MCF 10A (cell line): ENCODE measurements at regions of chr1 and their contacts with region 1.

Region 1: GRCh38 chr1:157156058-157156541 is 17.9 kb upstream of the ETV3 start:
- DNase-seq: peak; percentile 78
- H3K4me3 Mint-ChIP-seq: peak overlapping the region; percentile 63
- H3K27ac Mint-ChIP-seq: peak overlapping the region; percentile 33
- H3K4me1 Mint-ChIP-seq: peaks cover 40% of the 10 kb centered on the region
- H3K27me3 Mint-ChIP-seq: no peaks in the 10 kb centered on the region
- CTCF ChIP-seq: peak; percentile 99

Region 2: GRCh38 chr1:157073944-157074767 is 81.9 kb before region 1 on chr1:
- CTCF ChIA-PET with region 1: interaction called, 34 read pairs
- POLR2A ChIA-PET with region 1: no interaction called
- intact Hi-C with region 1: no loop called
- DNase-seq: peak; percentile 81
- H3K4me3 Mint-ChIP-seq: no peak overlapping the region
- H3K27ac Mint-ChIP-seq: no peak overlapping the region
- H3K4me1 Mint-ChIP-seq: no peaks in the 10 kb centered on the region
- H3K27me3 Mint-ChIP-seq: no peaks in the 10 kb centered on the region
- CTCF ChIP-seq: peak; percentile 60

Region 3: DNA sequence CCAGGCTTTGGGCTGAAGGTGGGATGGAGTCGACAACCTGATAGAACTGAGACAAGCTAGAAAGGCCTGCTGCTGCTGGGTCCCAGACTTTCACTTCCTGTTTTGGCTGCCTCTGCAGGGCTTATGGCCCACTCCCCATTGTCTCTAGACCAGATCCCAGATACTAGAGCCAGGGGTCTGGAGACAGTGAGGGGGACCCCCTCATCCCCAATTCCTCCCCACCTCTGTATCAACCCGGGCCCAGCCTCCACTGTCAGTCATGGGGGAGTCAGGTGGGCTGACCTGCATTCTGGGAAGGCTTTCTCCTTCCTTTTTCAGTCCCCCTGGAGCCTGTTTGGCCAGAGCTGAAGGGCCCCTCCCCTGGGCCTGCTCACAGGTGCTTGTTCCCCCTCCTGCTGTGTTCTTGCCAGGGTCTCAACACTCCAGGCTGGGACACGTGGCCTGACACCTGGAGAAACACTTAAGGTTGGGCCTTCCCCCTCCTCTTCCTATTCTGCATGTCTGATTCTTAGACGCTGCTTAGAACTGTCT is 38.5 kb before region 1 on chr1:
- CTCF ChIA-PET with region 1: interaction called, 53 read pairs
- POLR2A ChIA-PET with region 1: no interaction called
- intact Hi-C with region 1: no loop called
- DNase-seq: no peak
- H3K4me3 Mint-ChIP-seq: no peak overlapping the region
- H3K27ac Mint-ChIP-seq: no peak overlapping the region
- H3K4me1 Mint-ChIP-seq: no peaks in the 10 kb centered on the region
- H3K27me3 Mint-ChIP-seq: peaks cover 13% of the 10 kb centered on the region
- CTCF ChIP-seq: no peak

Region 4: DNA sequence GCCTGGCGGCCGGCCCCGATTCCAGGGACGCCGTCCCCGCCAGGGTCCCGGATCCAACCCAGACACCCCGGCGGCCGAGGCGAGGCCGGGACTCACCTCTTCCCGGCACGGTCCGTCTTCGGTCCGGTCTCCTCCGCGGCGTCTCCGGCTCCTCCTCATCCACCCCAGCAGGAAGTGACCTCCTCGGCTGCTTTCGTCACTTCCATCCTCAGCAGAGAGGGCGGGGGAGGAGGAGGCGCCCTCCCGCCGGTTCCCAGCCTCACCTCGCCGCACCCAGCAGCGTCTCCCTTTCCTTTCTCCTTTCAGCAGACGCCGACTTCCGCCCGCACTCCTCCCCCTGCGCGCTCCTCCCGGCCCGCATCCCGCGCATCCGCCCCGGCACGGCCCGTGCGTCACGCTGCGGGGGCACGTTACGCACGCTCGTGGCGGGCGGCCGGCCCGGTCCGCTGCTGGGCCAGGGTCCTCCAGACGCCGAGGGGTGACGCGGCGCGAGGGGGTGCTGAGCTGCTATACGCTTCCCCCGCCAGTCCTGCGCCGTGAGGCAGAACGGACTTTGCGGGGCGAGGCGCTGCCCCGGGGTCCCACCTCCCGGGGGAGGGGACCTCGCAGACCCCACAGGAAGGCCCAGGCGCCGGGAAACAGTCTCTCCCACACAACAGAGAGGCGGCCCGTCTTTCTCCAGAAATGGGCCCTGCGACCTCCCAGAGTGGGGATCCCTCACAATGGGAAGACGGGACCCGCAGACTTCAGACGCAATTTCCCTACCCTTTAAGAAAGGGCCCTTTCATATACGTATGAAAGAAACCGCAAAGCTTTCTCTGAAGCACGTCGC is 17.7 kb before region 1 on chr1 and contains the start of gene ETV3:
- CTCF ChIA-PET with region 1: interaction called, 419 read pairs
- POLR2A ChIA-PET with region 1: interaction called, 64 read pairs
- intact Hi-C with region 1: loop called (anchors 1 kb)
- DNase-seq: peak; percentile 97
- H3K4me3 Mint-ChIP-seq: peak within 1 kb of the TSS; percentile 79
- H3K27ac Mint-ChIP-seq: peak within 1 kb of the TSS; percentile 76
- H3K4me1 Mint-ChIP-seq: peaks cover 29% of the 10 kb centered on the region
- H3K27me3 Mint-ChIP-seq: no peaks in the 10 kb centered on the region
- CTCF ChIP-seq: no peak
- total RNA-seq, gene ETV3: 28.6 and 35.0 TPM in 2 replicates

Region 5: DNA sequence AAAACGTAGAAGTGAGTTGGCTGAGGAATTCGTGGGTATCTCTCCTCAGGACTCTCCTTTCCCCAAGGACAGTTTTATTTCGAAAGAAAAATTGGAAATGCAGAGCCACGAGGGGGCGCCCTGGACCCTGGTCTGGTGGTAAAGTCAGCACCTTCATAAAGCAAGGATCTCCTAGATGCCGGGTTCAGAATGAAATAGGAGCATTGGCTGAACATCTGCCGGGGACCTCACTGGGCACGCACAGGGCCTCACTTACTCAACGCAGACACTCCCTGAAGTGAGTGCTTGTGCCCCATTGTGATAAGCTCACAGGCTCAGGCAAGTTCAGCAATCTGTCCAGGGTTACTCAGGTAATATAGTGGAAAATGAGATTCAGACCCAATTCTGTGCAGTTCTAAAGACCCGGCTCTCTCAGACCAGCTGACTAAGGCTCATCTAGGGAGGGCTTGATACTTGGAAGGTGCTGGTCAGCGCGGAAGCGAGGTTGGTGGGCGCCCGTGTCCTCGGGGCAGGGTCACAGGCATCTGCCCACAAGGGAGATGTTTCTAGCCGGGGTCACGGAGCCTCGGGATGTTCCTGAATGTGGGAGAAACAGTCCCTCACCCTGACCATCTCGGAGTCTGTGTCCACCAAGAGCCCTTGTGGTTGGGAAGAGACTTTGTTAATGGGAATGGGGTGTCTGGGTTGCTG is 37.7 kb after region 1 on chr1:
- CTCF ChIA-PET with region 1: interaction called, 14 read pairs
- POLR2A ChIA-PET with region 1: no interaction called
- intact Hi-C with region 1: no loop called
- DNase-seq: peak; percentile 77
- H3K4me3 Mint-ChIP-seq: no peak overlapping the region
- H3K27ac Mint-ChIP-seq: no peak overlapping the region
- H3K4me1 Mint-ChIP-seq: peaks cover 6% of the 10 kb centered on the region
- H3K27me3 Mint-ChIP-seq: peaks cover 32% of the 10 kb centered on the region
- CTCF ChIP-seq: peak; percentile 83

Region 6: GRCh38 chr1:157288996-157289395 is 132.9 kb after region 1 on chr1:
- CTCF ChIA-PET with region 1: no interaction called
- POLR2A ChIA-PET with region 1: no interaction called
- intact Hi-C with region 1: no loop called
- DNase-seq: no peak
- H3K4me3 Mint-ChIP-seq: no peak overlapping the region
- H3K27ac Mint-ChIP-seq: no peak overlapping the region
- H3K4me1 Mint-ChIP-seq: no peaks in the 10 kb centered on the region
- H3K27me3 Mint-ChIP-seq: peaks cover 61% of the 10 kb centered on the region
- CTCF ChIP-seq: no peak